Aorta (tissue), 5 donors: ENCODE measurements at regions of chr2 and their contacts with region 1.

Region 1: DNA sequence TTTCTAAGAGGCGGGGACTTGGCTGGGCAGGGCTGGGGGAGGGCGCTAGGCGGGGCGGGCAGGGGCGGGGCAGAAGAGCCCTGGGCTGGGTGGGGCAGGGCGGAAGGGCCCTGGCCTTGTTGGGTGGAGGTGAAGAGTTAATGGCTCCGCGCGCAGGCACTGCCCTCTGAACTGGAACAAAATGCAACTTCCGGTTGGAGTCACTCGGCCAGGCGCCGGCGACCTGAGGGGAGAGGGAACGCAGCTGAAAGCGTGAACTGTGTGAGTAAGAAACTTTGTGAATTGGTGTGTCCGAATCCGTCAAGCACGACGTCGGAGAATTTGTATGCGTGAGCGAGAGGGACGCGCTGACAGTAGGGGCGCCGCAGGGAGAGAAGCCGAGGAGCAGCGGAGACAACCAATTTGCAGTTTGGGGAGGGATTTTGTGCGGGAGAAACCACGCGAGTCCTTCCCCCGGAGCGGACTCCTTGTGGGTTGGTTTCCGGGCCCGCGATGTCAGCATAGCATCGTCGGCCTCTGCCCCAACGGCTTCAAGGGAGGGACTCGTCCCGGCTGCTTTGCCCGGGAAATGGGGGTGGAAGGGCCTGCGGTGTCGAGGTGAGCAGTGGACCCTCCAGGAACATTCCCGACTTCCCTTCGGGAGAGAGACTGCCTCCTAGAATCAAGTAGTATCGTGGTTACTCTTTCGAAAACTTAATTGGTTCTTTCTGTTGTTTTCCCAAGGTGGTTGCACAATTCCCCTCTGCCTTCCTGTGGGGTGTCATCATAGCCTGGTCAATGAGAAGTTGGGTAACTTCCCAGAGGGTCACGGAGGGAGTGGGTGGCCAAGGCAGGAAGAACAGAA is at the start of gene TANK:
- DNase-seq: peak; percentile 93 to 95
- ATAC-seq: peak; percentile 97
- H3K4me3 ChIP-seq: peak within 1 kb of the TSS; percentile 88 to 96
- H3K27ac ChIP-seq: peak within 1 kb of the TSS in 1 of 2 donors; percentile 88
- H3K4me1 ChIP-seq: peaks cover 0 to 7% of the 10 kb centered on the region in 2 donors
- H3K27me3 ChIP-seq: no peaks in the 10 kb centered on the region
- total RNA-seq, gene TANK: 57.7 to 76.9 TPM

Region 2: GRCh38 chr2:161030260-161031063 is 130.0 kb before region 1 on chr2:
- intact Hi-C with region 1: no loop called
- DNase-seq: no peak
- ATAC-seq: peak; percentile 95
- H3K4me3 ChIP-seq: no peak overlapping the region
- H3K27ac ChIP-seq: peak overlapping the region; percentile 43 to 85
- H3K4me1 ChIP-seq: peaks cover 0 to 5% of the 10 kb centered on the region in 2 donors
- H3K27me3 ChIP-seq: no peaks in the 10 kb centered on the region

Region 3: GRCh38 chr2:161059388-161059787 is 101.1 kb before region 1 on chr2:
- intact Hi-C with region 1: no loop called
- DNase-seq: no peak
- ATAC-seq: no peak
- H3K4me3 ChIP-seq: no peak overlapping the region
- H3K27ac ChIP-seq: no peak overlapping the region
- H3K4me1 ChIP-seq: peaks cover 0 to 3% of the 10 kb centered on the region in 2 donors
- H3K27me3 ChIP-seq: peaks cover 0 to 2% of the 10 kb centered on the region in 2 donors

Region 4: DNA sequence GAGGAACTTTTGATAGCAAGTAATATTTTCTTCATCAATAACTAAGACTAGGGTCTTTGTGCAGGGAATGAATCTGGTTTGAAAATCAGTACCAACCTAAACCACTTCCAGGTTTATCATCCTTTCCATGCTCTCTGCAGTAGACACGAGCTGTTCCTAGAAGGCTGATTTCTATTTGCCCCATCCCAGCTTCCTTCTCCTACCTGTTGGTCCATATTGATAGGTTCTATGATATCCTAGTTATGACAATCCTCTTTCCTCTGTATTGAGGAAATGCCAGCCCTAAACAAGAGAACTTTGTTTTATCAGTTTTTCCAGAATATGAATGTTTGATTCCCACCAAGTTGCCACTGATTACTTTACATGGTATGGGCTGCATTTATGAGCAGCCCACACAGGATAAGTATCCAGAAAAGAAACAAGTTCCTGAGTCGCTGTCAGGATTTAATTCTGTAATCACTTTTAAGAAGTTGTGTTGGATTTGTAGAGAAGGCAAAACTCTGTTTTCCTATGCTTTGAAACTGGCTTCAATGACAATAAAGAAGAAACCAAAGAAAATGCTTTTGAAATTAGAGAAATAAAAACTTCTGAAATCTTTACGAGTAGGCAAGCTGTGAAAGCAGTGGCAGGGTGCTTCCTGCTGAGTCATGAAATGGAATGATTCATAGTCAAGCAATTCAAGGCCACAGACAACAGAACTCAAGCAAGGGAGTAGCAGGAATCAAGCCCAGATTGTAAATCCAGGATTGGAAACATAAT is 37.5 kb before region 1 on chr2:
- intact Hi-C with region 1: loop called in 1 of 2 experiments (anchors 5 kb)
- DNase-seq: peak in 1 of 2 donors; percentile 56
- ATAC-seq: peak; percentile 93
- H3K4me3 ChIP-seq: peak overlapping the region; percentile 8 to 40
- H3K27ac ChIP-seq: peak overlapping the region in 1 of 2 donors; percentile 87
- H3K4me1 ChIP-seq: peaks cover 0 to 4% of the 10 kb centered on the region in 2 donors
- H3K27me3 ChIP-seq: no peaks in the 10 kb centered on the region

Region 5: GRCh38 chr2:161199912-161200701 is 39.7 kb after region 1 on chr2:
- intact Hi-C with region 1: no loop called
- DNase-seq: no peak
- ATAC-seq: no peak
- H3K4me3 ChIP-seq: no peak overlapping the region
- H3K27ac ChIP-seq: no peak overlapping the region
- H3K4me1 ChIP-seq: no peaks in the 10 kb centered on the region
- H3K27me3 ChIP-seq: no peaks in the 10 kb centered on the region